ENCODE measurements at regions of chr12 and their contacts with region 1.

Region 1: GRCh38 chr12:121626087-121626852 is at the start of gene ORAI1:
- DNase-seq: peak; percentile 98
- ATAC-seq: peak; percentile 71 to 89 (median 78)
- H3K4me3 ChIP-seq: peak within 1 kb of the TSS; percentile 90
- H3K4me3 Mint-ChIP-seq: peak within 1 kb of the TSS; percentile 91
- H3K27ac ChIP-seq: peak within 1 kb of the TSS; percentile 99
- H3K27ac Mint-ChIP-seq: peak within 1 kb of the TSS; percentile 94
- H3K4me1 ChIP-seq: peaks cover 52% of the 10 kb centered on the region
- H3K4me1 Mint-ChIP-seq: peaks cover 41 to 52% of the 10 kb centered on the region in 2 donors
- H3K27me3 ChIP-seq: no peaks in the 10 kb centered on the region
- H3K27me3 Mint-ChIP-seq: no peaks in the 10 kb centered on the region
- CTCF ChIP-seq: no peak
- total RNA-seq, gene ORAI1: 64.6 to 74.1 (median 70.8) TPM

Region 2: GRCh38 chr12:121499929-121500793 is 126.1 kb before region 1 on chr12:
- intact Hi-C with region 1: loop called (anchors 2 kb)
- DNase-seq: peak; percentile 76 to 87
- ATAC-seq: peak; percentile 74 to 78 (median 75)
- H3K4me3 ChIP-seq: no peak overlapping the region
- H3K4me3 Mint-ChIP-seq: no peak overlapping the region
- H3K27ac ChIP-seq: no peak overlapping the region
- H3K27ac Mint-ChIP-seq: peak overlapping the region in 1 of 2 donors; percentile 59
- H3K4me1 ChIP-seq: peaks cover 57% of the 10 kb centered on the region
- H3K4me1 Mint-ChIP-seq: peaks cover 17 to 36% of the 10 kb centered on the region in 2 donors
- H3K27me3 ChIP-seq: no peaks in the 10 kb centered on the region
- H3K27me3 Mint-ChIP-seq: no peaks in the 10 kb centered on the region
- CTCF ChIP-seq: peak; percentile 98

Region 3: DNA sequence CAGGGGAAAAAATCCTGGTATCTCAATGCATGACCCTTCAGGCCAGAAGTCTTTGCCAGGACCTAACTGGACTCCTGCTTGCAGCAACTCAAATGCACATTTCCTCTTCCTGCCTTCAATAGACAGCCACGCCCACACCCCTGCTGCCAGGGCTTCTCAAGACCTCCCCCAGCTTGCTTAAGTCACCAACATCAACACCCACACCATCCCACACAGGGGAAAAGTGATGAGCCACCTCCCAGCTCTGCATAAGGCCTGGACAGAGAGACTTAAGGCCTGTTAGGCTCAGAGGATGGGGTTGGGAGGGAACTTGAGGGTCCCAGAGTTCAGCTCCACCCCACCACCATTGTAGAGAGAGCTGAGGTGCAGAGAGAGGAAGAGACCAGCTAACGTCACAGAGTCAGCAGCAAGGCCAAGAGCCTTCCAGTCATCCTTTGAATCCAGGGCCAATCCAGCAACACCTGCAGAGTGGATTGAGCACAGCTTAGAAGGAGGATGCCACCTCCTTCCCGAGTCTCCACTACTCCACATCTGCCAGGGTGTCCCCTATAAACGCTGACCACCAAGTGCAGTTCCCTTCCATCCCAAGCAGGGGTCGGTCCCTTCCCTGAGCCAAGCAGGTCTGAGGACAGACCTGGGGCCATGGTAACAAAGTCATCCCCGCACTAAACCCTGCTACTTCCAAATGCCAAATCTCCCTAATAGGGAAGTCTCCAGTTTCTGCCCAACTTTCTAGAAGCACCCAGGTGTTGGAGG is 95.5 kb before region 1 on chr12:
- intact Hi-C with region 1: loop called (anchors 5 kb)
- DNase-seq: peak; percentile 72 to 88
- ATAC-seq: peak; percentile 89 to 94 (median 90)
- H3K4me3 ChIP-seq: no peak overlapping the region
- H3K4me3 Mint-ChIP-seq: peak overlapping the region; percentile 47
- H3K27ac ChIP-seq: peak overlapping the region; percentile 55
- H3K27ac Mint-ChIP-seq: peak overlapping the region; percentile 76 to 89
- H3K4me1 ChIP-seq: peaks cover 47% of the 10 kb centered on the region
- H3K4me1 Mint-ChIP-seq: peaks cover 29 to 31% of the 10 kb centered on the region in 2 donors
- H3K27me3 ChIP-seq: no peaks in the 10 kb centered on the region
- H3K27me3 Mint-ChIP-seq: no peaks in the 10 kb centered on the region
- CTCF ChIP-seq: no peak

Region 4: GRCh38 chr12:121560392-121561008 is 65.8 kb before region 1 on chr12:
- intact Hi-C with region 1: loop called (anchors 1 kb)
- DNase-seq: peak in 1 of 2 donors; percentile 25
- ATAC-seq: no peak
- H3K4me3 ChIP-seq: no peak overlapping the region
- H3K4me3 Mint-ChIP-seq: no peak overlapping the region
- H3K27ac ChIP-seq: no peak overlapping the region
- H3K27ac Mint-ChIP-seq: peak overlapping the region; percentile 80 to 96
- H3K4me1 ChIP-seq: peaks cover 34% of the 10 kb centered on the region
- H3K4me1 Mint-ChIP-seq: peaks cover 10 to 25% of the 10 kb centered on the region in 2 donors
- H3K27me3 ChIP-seq: no peaks in the 10 kb centered on the region
- H3K27me3 Mint-ChIP-seq: no peaks in the 10 kb centered on the region
- CTCF ChIP-seq: no peak

Region 5: DNA sequence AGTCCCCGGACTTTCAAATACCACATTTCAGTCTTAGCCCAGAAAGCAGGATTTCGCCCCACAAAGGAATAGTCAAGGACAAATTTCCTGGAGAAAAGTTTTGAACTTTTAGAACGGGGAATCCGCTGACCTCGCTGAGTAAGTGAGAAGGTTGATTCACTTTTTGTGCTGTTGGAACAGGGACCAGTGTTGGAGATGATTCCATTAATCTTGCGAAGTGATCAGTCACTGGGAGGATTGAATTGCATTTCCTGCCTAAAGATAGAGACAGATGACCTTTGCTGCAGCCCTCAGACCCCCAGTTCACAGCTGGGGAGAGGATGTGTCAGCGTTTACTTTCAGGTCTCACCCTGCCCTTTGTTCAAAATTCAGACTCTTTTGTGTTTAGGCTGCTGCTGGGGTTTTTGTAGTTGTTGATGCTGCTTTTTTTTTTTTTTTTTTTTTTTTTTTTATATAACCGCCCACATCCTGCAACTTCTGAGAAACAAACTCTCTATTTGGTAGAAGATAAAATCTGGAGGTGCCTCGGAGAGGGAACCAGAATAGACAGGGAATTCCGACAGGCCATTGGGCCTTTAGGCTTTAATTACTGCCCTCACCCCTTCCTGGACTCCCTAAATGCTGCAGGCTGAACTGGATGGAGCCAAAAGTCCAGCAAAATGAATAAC is 35.7 kb before region 1 on chr12:
- intact Hi-C with region 1: loop called (anchors 1 kb)
- DNase-seq: peak; percentile 63 to 89
- ATAC-seq: peak; percentile 74 to 84 (median 78)
- H3K4me3 ChIP-seq: peak overlapping the region; percentile 37
- H3K4me3 Mint-ChIP-seq: peak overlapping the region; percentile 89
- H3K27ac ChIP-seq: peak overlapping the region; percentile 98
- H3K27ac Mint-ChIP-seq: peak overlapping the region; percentile 95 to 99
- H3K4me1 ChIP-seq: peaks cover 39% of the 10 kb centered on the region
- H3K4me1 Mint-ChIP-seq: peaks cover 32 to 37% of the 10 kb centered on the region in 2 donors
- H3K27me3 ChIP-seq: no peaks in the 10 kb centered on the region
- H3K27me3 Mint-ChIP-seq: no peaks in the 10 kb centered on the region
- CTCF ChIP-seq: no peak

Region 6: GRCh38 chr12:121668750-121669520 is 42.7 kb after region 1 on chr12:
- intact Hi-C with region 1: loop called (anchors 1 kb)
- DNase-seq: peak; percentile 47 to 79
- ATAC-seq: no peak
- H3K4me3 ChIP-seq: no peak overlapping the region
- H3K4me3 Mint-ChIP-seq: no peak overlapping the region
- H3K27ac ChIP-seq: no peak overlapping the region
- H3K27ac Mint-ChIP-seq: peak overlapping the region in 1 of 2 donors; percentile 79
- H3K4me1 ChIP-seq: peaks cover 51% of the 10 kb centered on the region
- H3K4me1 Mint-ChIP-seq: peaks cover 27 to 57% of the 10 kb centered on the region in 2 donors
- H3K27me3 ChIP-seq: no peaks in the 10 kb centered on the region
- H3K27me3 Mint-ChIP-seq: no peaks in the 10 kb centered on the region
- CTCF ChIP-seq: peak; percentile 68

Region 7: DNA sequence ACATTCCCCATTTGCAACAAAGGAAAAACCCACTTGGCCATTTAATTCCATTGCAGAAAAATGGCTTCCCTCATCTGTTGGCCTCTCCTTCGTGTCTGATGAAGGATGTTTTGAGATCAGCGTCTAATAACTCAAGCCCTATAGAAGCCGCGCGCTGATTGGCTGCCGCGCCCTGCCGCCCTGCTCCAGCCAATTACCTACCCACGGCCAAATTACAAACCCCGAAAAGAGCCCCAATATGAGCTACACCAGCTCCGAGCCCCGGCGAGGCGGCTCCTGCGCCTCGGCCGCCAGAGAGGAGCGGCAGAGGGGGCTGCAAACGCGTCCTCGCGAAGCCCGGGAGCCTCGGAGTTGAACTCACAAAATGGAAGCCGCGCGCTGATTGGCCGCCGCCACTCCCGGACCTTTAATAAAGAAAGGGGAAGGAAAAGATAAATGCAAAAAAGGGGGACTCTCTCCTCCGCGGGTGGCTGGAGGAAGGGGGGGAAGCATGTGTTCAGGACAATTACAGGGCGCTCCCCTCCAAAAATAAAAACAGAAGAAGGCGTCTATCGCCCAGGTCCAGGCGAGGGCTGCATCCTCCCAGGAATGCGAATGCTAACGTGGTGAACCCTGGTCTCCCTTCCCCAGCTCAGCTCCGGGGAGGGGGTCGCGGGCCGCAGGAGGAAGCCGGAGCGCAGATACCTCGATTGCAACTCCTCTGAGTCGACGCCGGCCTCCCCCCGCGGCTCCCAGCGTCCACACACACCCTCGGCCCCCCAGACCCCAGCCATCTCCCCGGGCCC is 176.8 kb after region 1 on chr12:
- intact Hi-C with region 1: loop called (anchors 2 kb)
- DNase-seq: peak; percentile 85 to 94
- ATAC-seq: peak; percentile 52 to 69 (median 59)
- H3K4me3 ChIP-seq: peak overlapping the region; percentile 57
- H3K4me3 Mint-ChIP-seq: peak overlapping the region; percentile 100
- H3K27ac ChIP-seq: peak overlapping the region; percentile 97
- H3K27ac Mint-ChIP-seq: peak overlapping the region; percentile 100
- H3K4me1 ChIP-seq: peaks cover 60% of the 10 kb centered on the region
- H3K4me1 Mint-ChIP-seq: peaks cover 44 to 59% of the 10 kb centered on the region in 2 donors
- H3K27me3 ChIP-seq: no peaks in the 10 kb centered on the region
- H3K27me3 Mint-ChIP-seq: no peaks in the 10 kb centered on the region
- CTCF ChIP-seq: no peak